ENCODE measurements at regions of chr2 and their contacts with region 1.

Region 1: GRCh38 chr2:218286570-218287459 is 5.5 kb downstream of the TMBIM1 start:
- DNase-seq: peak; percentile 76
- ATAC-seq: peak; percentile 75
- H3K4me3 Mint-ChIP-seq: peak overlapping the region; percentile 92
- H3K27ac Mint-ChIP-seq: peak overlapping the region; percentile 96
- H3K4me1 Mint-ChIP-seq: peaks cover 59% of the 10 kb centered on the region
- H3K27me3 Mint-ChIP-seq: no peaks in the 10 kb centered on the region

Region 2: DNA sequence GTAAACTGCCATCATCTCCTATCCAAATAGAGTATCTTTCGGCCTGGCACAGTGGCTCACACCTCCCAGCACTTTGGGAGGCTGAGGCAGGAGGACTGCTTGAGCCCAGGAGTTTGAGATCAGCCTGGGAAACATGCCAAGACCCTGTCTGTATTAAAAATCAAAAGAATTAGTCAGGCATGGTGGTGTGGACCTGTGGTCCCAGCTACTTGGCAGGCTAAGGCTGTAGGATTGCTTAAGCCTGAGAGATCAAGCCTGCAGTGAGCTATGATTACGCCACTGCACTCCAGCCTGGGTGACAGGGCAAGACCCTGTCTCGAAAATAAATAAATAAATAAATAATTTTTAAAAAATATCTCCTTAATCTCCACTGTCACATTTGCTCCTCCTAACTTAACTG is 84.5 kb before region 1 on chr2:
- POLR2A ChIA-PET with region 1: no interaction called
- DNase-seq: no peak
- ATAC-seq: no peak
- H3K4me3 Mint-ChIP-seq: no peak overlapping the region
- H3K27ac Mint-ChIP-seq: no peak overlapping the region
- H3K4me1 Mint-ChIP-seq: peaks cover 3% of the 10 kb centered on the region
- H3K27me3 Mint-ChIP-seq: peaks cover 17% of the 10 kb centered on the region

Region 3: GRCh38 chr2:218234521-218234920 is 52.3 kb before region 1 on chr2:
- POLR2A ChIA-PET with region 1: no interaction called
- DNase-seq: no peak
- ATAC-seq: no peak
- H3K4me3 Mint-ChIP-seq: no peak overlapping the region
- H3K27ac Mint-ChIP-seq: peak overlapping the region; percentile 11
- H3K4me1 Mint-ChIP-seq: peaks cover 22% of the 10 kb centered on the region
- H3K27me3 Mint-ChIP-seq: no peaks in the 10 kb centered on the region

Region 4: DNA sequence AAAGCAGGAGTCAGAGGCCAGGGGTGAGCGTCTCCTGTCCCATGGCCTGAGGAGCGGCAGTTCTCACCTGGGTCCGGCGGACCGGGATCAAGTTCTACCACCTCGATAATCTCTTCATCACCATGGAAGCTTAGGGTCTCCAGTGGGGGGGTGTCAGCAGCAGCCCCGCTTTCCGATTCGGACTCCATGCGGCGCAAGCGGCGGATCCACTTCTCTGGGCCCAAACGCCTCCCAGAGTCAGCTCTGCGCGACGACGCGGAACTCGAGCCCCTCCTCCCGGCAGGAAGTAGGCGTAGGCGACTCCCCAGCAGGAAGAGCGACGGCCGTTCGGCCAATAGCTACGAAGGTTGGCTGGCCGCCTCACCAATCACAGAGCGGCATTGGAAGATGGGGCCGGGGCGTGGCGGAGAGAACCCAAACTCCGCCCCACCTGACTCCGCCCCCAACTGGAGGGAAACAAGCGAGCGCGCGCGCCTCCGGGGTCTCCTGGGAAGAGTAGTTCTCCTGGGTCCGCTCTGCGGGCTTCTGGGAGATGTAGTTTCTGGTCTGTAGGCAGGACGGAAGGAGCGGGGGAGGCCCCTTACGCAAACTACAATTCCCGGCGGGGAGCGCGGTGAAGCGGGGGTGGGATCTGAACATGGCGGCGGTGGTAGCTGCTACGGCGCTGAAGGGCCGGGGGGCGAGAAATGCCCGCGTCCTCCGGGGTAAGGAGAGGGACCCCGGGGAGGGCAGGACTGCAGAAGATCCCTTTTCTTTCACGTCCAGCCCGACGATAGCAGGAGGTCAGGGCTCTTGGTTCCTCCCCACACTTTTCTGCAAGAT is 16.7 kb before region 1 on chr2 and contains the starts of genes AAMP and PNKD:
- POLR2A ChIA-PET with region 1: interaction called, 76 read pairs
- DNase-seq: peak; percentile 100
- ATAC-seq: peak; percentile 91
- H3K4me3 Mint-ChIP-seq: peak within 1 kb of the TSS; percentile 91
- H3K27ac Mint-ChIP-seq: peak within 1 kb of the TSS; percentile 91
- H3K4me1 Mint-ChIP-seq: peaks cover 32% of the 10 kb centered on the region
- H3K27me3 Mint-ChIP-seq: no peaks in the 10 kb centered on the region
- total RNA-seq, gene AAMP: 45.2 to 51.7 TPM
- total RNA-seq, gene PNKD: 33.9 to 36.3 TPM